Activated CD8-positive, alpha-beta T cell treated with anti-CD3 and anti-CD28 coated beads for 36 hours (primary cell): ENCODE measurements at regions of chr15 and their contacts with region 1.

Region 1: GRCh38 chr15:60585743-60586708 is 107.1 kb upstream of the ICE2 start:
- DNase-seq: peak; percentile 71
- ATAC-seq: no peak
- H3K4me3 Mint-ChIP-seq: peak overlapping the region; percentile 62
- H3K27ac Mint-ChIP-seq: peak overlapping the region; percentile 82
- H3K4me1 Mint-ChIP-seq: peaks cover 79% of the 10 kb centered on the region
- H3K27me3 Mint-ChIP-seq: no peaks in the 10 kb centered on the region
- CTCF ChIP-seq: peak; percentile 89

Region 2: GRCh38 chr15:60520825-60521368 is 65.1 kb before region 1 on chr15:
- CTCF ChIA-PET with region 1: interaction called, 43 read pairs
- POLR2A ChIA-PET with region 1: interaction called, 4 read pairs
- intact Hi-C with region 1: no loop called
- DNase-seq: peak; percentile 92
- ATAC-seq: peak; percentile 74
- H3K4me3 Mint-ChIP-seq: no peak overlapping the region
- H3K27ac Mint-ChIP-seq: peak overlapping the region; percentile 83
- H3K4me1 Mint-ChIP-seq: peaks cover 53% of the 10 kb centered on the region
- H3K27me3 Mint-ChIP-seq: no peaks in the 10 kb centered on the region
- CTCF ChIP-seq: peak; percentile 92

Region 3: GRCh38 chr15:60568301-60568742 is 17.7 kb before region 1 on chr15:
- CTCF ChIA-PET with region 1: interaction called, 52 read pairs
- POLR2A ChIA-PET with region 1: interaction called, 19 read pairs
- intact Hi-C with region 1: no loop called
- DNase-seq: peak; percentile 39
- ATAC-seq: peak; percentile 17
- H3K4me3 Mint-ChIP-seq: peak overlapping the region; percentile 36
- H3K27ac Mint-ChIP-seq: peak overlapping the region; percentile 78
- H3K4me1 Mint-ChIP-seq: peaks cover 89% of the 10 kb centered on the region
- H3K27me3 Mint-ChIP-seq: no peaks in the 10 kb centered on the region
- CTCF ChIP-seq: no peak

Region 4: GRCh38 chr15:60720493-60721256 is 134.6 kb after region 1 on chr15:
- CTCF ChIA-PET with region 1: interaction called, 7 read pairs
- POLR2A ChIA-PET with region 1: interaction called, 3 read pairs
- intact Hi-C with region 1: loop called (anchors 10 kb)
- DNase-seq: peak; percentile 85
- ATAC-seq: peak; percentile 91
- H3K4me3 Mint-ChIP-seq: peak overlapping the region; percentile 43
- H3K27ac Mint-ChIP-seq: peak overlapping the region; percentile 90
- H3K4me1 Mint-ChIP-seq: peaks cover 48% of the 10 kb centered on the region
- H3K27me3 Mint-ChIP-seq: peaks cover 3% of the 10 kb centered on the region
- CTCF ChIP-seq: no peak

Region 5: DNA sequence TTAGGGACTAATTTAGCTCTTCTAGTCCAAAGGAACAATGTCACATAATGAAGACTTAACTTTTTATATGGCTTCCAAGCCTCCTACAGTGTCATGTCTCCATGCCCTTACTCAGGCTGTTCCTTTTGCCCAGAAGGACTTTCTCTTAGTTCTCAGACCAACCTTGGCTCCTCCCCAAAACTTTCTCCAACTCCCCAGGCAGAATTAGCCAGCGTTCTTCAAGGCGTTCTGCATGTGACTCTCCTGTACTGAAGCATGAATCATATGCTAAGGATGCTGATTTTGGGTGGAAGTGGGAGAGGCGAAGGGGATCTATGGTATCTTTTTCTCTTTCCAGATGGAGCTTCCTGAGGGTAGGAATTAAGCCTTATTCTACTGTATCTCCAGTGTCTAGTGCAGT is 228.0 kb after region 1 on chr15:
- CTCF ChIA-PET with region 1: no interaction called
- POLR2A ChIA-PET with region 1: no interaction called
- intact Hi-C with region 1: no loop called
- DNase-seq: no peak
- ATAC-seq: no peak
- H3K4me3 Mint-ChIP-seq: no peak overlapping the region
- H3K27ac Mint-ChIP-seq: no peak overlapping the region
- H3K4me1 Mint-ChIP-seq: peaks cover 31% of the 10 kb centered on the region
- H3K27me3 Mint-ChIP-seq: no peaks in the 10 kb centered on the region
- CTCF ChIP-seq: no peak

Region 6: DNA sequence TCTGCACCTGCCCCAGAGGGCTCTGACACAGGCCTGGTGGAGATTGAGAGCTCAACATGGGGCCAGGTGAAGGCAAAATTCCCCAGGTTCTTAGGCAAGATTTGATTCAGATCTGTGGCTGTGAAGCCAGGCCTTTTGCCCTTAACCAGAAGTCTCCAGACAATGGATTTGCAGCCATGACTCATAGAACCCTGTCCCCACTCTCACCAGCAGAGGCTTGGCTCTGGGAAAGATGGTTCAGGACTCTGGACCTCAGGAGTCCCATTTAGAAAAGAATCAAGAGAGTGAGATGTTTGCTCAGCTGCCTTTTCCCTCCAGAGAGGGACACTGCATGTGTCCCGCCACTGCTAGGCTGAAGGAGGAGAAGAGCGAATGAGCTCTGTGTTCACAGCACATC is 254.3 kb after region 1 on chr15:
- CTCF ChIA-PET with region 1: interaction called, 16 read pairs
- POLR2A ChIA-PET with region 1: no interaction called
- intact Hi-C with region 1: loop called (anchors 5 kb)
- DNase-seq: no peak
- ATAC-seq: no peak
- H3K4me3 Mint-ChIP-seq: peak overlapping the region; percentile 62
- H3K27ac Mint-ChIP-seq: peak overlapping the region; percentile 25
- H3K4me1 Mint-ChIP-seq: peaks cover 77% of the 10 kb centered on the region
- H3K27me3 Mint-ChIP-seq: peaks cover 1% of the 10 kb centered on the region
- CTCF ChIP-seq: no peak

Region 7: DNA sequence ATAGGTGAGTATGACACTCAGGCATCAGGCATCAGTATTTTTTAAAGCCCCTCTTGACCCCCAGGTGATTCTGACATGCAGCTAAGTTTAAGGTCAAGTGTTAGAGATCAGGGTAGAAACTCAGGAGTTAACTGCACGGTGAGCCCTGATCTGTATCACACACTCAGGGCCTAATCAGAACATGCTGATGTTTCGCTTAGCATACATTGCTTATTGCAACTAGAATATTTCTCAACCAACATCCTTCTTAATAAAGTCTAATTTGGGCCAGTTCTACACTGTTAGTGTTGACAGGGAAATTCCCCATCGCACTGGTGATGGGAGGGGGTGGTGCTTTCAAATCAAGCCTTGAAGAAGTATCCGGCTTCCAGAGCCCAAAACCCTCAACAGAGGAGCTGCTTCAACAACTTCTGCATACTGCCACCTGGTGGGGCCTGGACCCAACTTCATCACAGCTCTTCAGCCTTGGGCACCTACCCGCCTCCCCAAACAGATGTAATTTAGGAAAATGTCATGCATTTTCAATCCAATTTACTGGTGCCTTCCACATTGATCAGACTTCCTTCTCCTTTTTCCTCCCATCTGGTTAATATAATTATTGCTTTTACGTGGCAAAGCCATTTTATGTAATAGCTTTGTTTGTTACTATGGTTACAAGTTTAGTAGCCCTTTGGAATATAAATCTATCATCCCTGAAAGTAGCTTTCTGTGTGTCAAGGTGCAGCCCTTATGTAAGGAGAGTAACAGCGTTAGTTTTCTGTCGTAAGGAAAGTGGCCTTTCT is 330.8 kb after region 1 on chr15:
- CTCF ChIA-PET with region 1: interaction called, 110 read pairs
- POLR2A ChIA-PET with region 1: interaction called, 4 read pairs
- intact Hi-C with region 1: loop called (anchors 2 kb)
- DNase-seq: peak; percentile 95
- ATAC-seq: peak; percentile 95
- H3K4me3 Mint-ChIP-seq: no peak overlapping the region
- H3K27ac Mint-ChIP-seq: no peak overlapping the region
- H3K4me1 Mint-ChIP-seq: peaks cover 9% of the 10 kb centered on the region
- H3K27me3 Mint-ChIP-seq: no peaks in the 10 kb centered on the region
- CTCF ChIP-seq: peak; percentile 86